AG04450 (cell line): ENCODE measurements at regions of chr12 and their contacts with region 1.

Region 1: GRCh38 chr12:117874842-117875434 is 93.9 kb downstream of the KSR2 start:
- DNase-seq: peak; percentile 13
- H3K4me3 ChIP-seq: no peak overlapping the region
- H3K27ac ChIP-seq: no peak overlapping the region
- H3K27me3 ChIP-seq: peaks cover 2% of the 10 kb centered on the region
- CTCF ChIP-seq: peak; percentile 84

Region 2: GRCh38 chr12:117857632-117858612 is 17.0 kb before region 1 on chr12:
- CTCF ChIA-PET with region 1: interaction called, 16 read pairs
- POLR2A ChIA-PET with region 1: no interaction called
- DNase-seq: no peak
- H3K4me3 ChIP-seq: no peak overlapping the region
- H3K27ac ChIP-seq: no peak overlapping the region
- H3K27me3 ChIP-seq: no peaks in the 10 kb centered on the region
- CTCF ChIP-seq: peak; percentile 52

Region 3: DNA sequence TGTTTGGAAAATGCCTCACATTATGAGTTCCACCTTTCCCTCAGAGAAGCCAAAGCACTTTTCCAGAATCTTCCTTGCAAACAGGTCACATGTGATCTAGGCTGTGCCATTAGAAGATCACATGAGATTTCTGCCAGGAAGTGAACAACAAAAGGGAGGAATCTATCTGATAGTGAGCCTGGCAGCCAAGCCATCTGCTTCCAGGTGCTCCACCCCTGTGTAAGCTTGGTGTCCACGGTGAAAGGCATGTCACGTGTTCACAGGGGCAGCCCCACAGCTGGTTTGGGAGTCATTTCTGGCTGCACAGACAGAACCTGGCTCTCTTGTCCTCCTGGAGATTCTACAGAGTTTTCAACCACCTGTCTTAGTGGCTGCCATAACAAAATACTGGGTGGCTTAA is 97.4 kb after region 1 on chr12:
- CTCF ChIA-PET with region 1: interaction called, 13 read pairs
- POLR2A ChIA-PET with region 1: no interaction called
- DNase-seq: no peak
- H3K4me3 ChIP-seq: no peak overlapping the region
- H3K27ac ChIP-seq: no peak overlapping the region
- H3K27me3 ChIP-seq: peaks cover 20% of the 10 kb centered on the region
- CTCF ChIP-seq: no peak

Region 4: DNA sequence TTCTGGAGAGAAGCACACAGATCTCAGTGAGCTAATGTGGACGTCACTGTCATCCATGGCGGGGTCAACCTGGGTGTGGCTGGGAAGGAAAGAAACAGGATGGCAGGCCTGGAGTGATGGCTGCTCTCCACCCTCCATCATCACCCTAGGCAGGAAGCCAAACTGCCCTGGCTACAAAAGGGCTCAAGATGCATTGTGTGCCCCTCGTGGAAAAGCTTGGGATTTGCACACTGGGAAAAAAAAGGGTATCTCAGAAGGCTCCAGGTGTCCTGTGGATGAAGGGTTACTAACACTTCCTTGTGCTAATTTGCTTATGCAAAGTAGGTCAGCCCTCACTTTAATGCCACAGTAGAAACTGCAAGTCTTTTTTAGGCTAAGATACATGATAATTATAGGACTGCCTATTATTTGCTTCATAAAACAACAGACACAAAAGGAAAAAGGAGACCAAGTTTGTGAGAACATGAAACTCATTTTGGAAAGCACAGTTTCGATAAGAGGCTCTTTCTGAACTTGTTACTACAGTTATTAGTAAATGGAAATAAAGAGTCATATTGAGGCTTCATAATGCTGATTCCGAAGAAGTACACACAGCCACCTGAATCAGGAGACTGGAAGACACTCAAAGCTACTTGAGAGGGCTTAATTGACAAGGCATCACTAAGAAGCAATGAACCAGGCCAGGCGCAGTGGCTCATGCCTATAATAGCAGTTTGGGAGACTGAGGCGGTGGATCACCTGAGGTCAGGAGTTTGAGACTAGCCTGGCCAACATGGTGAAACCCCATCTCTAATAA is 160.5 kb after region 1 on chr12:
- CTCF ChIA-PET with region 1: interaction called, 82 read pairs
- POLR2A ChIA-PET with region 1: no interaction called
- DNase-seq: no peak
- H3K4me3 ChIP-seq: no peak overlapping the region
- H3K27ac ChIP-seq: peak overlapping the region; percentile 21
- H3K27me3 ChIP-seq: no peaks in the 10 kb centered on the region
- CTCF ChIP-seq: 0 out of 2 replicates have a peak, but pooled peaks have one; percentile 18

Region 5: DNA sequence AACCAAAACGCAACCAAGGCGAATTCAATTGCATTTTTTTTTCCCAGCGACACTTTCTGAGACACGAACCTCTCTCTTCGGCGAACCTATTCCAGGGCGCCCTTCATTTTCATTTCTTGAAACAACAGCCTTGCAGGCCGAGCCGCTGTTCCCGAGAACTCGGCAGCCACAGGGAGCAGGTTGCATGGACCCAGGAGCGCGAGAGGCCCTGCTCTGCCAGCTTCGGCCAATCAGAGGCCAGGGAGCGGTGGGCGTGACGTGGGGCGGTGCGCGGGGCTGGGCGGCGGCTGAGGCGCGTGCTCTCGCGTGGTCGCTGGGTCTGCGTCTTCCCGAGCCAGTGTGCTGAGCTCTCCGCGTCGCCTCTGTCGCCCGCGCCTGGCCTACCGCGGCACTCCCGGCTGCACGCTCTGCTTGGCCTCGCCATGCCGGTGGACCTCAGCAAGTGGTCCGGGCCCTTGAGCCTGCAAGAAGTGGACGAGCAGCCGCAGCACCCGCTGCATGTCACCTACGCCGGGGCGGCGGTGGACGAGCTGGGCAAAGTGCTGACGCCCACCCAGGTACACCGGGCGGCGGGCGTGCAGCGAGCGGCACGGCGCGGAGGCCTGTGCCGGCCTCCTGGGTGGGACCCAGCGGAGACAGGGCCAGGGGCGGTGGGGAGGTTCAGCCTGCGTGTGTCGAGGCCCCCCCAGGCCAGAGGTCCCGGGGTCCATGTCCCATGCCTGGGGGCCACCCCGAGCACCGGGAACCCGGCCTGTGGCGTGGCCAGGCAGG is 261.0 kb after region 1 on chr12 and contains the start of gene PEBP1:
- CTCF ChIA-PET with region 1: interaction called, 17 read pairs
- POLR2A ChIA-PET with region 1: no interaction called
- DNase-seq: peak; percentile 38
- H3K4me3 ChIP-seq: peak within 1 kb of the TSS; percentile 89
- H3K27ac ChIP-seq: peak within 1 kb of the TSS; percentile 47
- H3K27me3 ChIP-seq: no peaks in the 10 kb centered on the region
- CTCF ChIP-seq: no peak
- polyA plus RNA-seq, gene PEBP1: 149 and 151 TPM in 2 replicates

Region 6: DNA sequence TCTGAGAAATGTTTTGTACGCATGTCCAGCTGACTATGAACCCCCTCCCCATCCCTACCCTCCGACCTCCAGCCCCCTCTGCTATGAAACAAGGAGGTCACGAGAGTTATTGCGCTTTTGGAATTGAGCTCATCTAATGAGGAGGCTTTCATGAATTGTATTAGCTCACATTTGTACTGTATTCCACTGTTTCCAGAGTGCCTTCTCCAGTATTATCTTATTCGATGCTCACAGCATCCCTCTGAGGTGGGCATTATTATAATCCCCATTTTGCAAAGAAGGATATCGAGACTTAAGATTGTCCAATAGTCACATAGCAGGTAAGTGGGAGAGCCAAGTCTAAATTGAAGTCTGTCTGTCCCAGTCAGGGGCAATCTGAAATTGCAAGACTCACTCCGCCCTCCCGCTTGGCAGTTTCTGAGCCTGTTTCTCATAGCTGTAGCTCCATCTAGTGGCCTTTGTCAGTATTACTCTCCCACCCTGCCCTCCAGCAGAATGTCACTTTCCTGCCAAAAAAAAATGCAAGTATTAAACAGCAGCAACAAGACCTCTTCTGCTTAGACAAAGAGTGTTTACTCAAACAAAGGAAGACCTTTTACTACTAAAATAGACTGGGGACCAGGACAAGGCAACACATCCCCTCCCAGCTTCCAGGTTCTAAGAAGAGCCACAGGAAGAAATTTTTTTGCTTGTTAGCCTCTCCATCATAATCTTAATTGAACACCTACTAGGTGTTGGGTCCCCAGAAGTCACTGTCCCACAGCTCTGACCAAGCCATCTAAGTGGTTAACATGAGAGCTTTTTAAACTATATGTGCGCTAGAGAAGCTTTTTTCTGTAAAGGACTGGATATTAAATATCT is 1670.1 kb after region 1 on chr12:
- CTCF ChIA-PET with region 1: interaction called, 10 read pairs
- POLR2A ChIA-PET with region 1: no interaction called
- DNase-seq: peak; percentile 49
- H3K4me3 ChIP-seq: no peak overlapping the region
- H3K27ac ChIP-seq: no peak overlapping the region
- H3K27me3 ChIP-seq: no peaks in the 10 kb centered on the region
- CTCF ChIP-seq: peak; percentile 87